ENCODE measurements at regions of chr20 and their contacts with region 1.

Region 1: GRCh38 chr20:62926239-62927104 is at the start of gene DIDO1:
- DNase-seq: peak; percentile 78 to 99 (median 88)

Region 2: GRCh38 chr20:62603021-62603906 is 323.2 kb before region 1 on chr20:
- intact Hi-C with region 1: no loop called
- DNase-seq: peak in 3 of 10 donors; percentile 44 to 86 (median 77)

Region 3: DNA sequence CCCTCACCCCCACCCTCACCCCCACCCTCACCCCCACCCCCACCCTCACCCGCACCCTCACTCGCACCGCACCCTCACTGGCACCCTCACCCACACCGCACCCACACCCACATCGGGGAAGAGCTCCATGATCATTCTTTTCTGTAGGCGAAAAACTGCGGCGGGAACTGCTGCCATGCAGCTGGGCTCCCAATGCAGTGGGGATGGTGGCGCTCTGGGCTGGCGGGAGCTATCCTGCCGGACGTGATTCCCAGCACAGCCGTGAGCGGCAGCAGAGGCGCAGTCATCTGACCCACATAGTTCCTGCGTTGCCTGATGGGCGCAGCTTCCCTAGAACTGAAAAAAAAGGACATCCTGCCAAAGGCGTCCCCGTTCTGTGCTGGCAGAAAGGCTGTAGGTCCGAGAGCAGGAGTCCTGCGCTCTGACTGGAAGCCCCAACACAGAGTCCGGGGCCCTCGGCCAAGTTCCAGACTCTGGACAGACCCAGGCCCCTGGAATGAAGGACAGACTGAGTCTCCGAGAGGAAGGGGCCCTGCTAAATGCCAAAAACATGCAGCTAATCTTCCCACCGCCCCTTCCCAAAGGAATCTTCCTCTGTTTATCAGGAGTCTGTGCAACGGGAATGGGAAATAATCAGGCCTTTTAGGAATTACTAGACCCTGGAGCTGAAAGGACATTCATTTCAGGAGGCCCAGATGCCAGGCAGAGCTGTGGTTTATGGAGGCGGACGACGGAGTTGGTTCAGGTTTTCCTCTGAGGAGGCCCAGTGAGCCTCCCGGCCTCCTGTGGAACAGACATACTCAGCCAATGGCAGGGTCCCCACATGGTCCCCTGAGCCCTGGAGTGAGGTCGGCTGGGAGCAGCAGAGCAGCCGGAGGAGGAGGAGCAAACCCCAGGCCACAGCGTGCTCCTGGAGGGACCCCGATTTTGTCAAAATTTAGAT is 50.8 kb before region 1 on chr20:
- intact Hi-C with region 1: loop called (anchors 5 kb)
- DNase-seq: peak; percentile 66 to 97 (median 82)

Region 4: GRCh38 chr20:62900052-62900691 is 26.3 kb before region 1 on chr20:
- intact Hi-C with region 1: loop called (anchors 1 kb)
- DNase-seq: peak; percentile 70 to 96 (median 82)

Region 5: GRCh38 chr20:62937366-62938104 is 11.1 kb after region 1 on chr20:
- intact Hi-C with region 1: loop called (anchors 1 kb)
- DNase-seq: peak; percentile 87 to 99 (median 92)